HEK293T (cell line): ENCODE measurements at regions of chr15 and their contacts with region 1.

Region 1: GRCh38 chr15:74127260-74127953 is 3.0 kb upstream of the ISLR2 start:
- DNase-seq: peak; percentile 91

Region 2: GRCh38 chr15:74307827-74308644 is 180.6 kb after region 1 on chr15:
- CTCF ChIA-PET with region 1: interaction called, 46 read pairs
- POLR2A ChIA-PET with region 1: interaction called, 4 read pairs
- DNase-seq: peak; percentile 61

Region 3: DNA sequence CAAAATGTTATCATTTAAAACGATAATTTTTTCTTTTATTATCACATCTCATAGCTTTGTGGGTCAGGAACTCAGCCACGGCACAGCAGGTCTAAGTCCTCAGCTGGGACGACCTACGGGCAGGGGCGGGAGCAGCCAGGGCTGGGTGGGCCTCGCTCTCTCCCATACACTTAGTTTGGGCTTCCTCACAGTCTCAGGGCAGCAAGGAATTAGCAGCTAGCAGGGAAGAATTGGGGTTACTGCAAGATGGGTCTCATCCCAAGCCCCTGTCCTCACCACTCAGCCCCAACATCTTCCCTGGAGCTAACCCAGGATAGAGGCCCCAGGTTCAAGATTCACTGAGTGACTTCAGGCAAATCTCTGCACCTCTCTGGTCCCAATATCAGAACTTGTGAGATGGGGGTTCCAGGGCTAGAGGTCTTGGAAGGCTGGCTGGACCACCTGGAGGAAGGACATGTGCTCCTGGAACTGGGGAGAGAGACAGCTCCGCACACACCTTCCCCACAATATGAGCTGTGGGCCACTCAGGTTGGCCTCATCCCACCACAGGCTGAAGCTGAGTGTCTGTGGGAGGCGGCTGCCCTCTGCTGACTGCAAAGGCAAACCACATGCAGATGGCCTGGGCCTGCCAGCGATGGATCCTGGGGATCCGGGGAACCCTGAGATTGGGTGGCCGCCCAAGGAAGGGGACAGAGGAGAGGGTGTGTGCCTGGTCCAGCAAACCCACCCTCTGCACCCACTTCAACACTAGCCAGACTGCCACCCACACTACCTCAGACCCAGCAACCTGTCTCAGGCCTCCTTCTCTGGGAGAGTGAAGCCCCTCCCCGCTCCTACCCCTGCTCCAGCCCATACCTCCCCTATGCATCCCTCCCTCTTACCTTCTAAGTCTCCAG is 195.0 kb after region 1 on chr15:
- CTCF ChIA-PET with region 1: interaction called, 12 read pairs
- POLR2A ChIA-PET with region 1: interaction called, 3 read pairs
- DNase-seq: peak; percentile 82